ENCODE measurements at regions of chr18 and their contacts with region 1.

Region 1: GRCh38 chr18:66393463-66393862 is 210.4 kb downstream of the CDH19 start:
- DNase-seq: no peak
- ATAC-seq: no peak
- H3K4me3 ChIP-seq: no peak overlapping the region
- H3K27ac ChIP-seq: no peak overlapping the region
- H3K4me1 ChIP-seq: no peaks in the 10 kb centered on the region
- H3K27me3 ChIP-seq: no peaks in the 10 kb centered on the region
- CTCF ChIP-seq: peak in 1 of 12 donors; percentile 5
- POLR2A ChIP-seq: no peak

Region 2: GRCh38 chr18:66344227-66344626 is 49.2 kb before region 1 on chr18:
- intact Hi-C with region 1: loop called in 1 of 10 experiments (anchors 5 kb)
- DNase-seq: no peak
- ATAC-seq: no peak
- H3K4me3 ChIP-seq: no peak overlapping the region
- H3K27ac ChIP-seq: no peak overlapping the region
- H3K4me1 ChIP-seq: no peaks in the 10 kb centered on the region
- H3K27me3 ChIP-seq: no peaks in the 10 kb centered on the region
- CTCF ChIP-seq: no peak
- POLR2A ChIP-seq: no peak

Region 3: GRCh38 chr18:66432636-66433035 is 39.2 kb after region 1 on chr18:
- intact Hi-C with region 1: loop called in 1 of 10 experiments (anchors 1 kb)
- DNase-seq: no peak
- ATAC-seq: no peak
- H3K4me3 ChIP-seq: no peak overlapping the region
- H3K27ac ChIP-seq: no peak overlapping the region
- H3K4me1 ChIP-seq: no peaks in the 10 kb centered on the region
- H3K27me3 ChIP-seq: no peaks in the 10 kb centered on the region
- CTCF ChIP-seq: no peak
- POLR2A ChIP-seq: no peak

Region 4: DNA sequence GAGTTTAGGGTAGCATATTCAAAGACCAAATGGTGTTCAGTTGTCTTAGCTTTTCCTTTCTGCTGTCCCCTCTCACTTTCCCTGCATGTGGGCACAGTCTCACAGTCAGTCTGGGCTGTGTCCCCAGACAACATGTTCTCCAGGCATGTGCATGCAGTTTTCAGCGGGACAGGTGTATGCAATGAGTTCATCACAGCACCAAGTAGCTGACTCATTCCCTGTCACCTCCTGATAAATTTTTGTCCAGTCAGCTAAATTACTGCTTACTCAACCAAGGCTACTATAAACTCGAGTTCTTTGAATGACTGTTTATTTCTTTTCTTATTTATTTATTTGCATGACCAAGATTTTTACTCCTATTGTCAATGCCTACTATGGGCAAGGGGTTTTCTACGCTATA is 359.3 kb after region 1 on chr18:
- intact Hi-C with region 1: no loop called
- DNase-seq: no peak
- ATAC-seq: no peak
- H3K4me3 ChIP-seq: no peak overlapping the region
- H3K27ac ChIP-seq: no peak overlapping the region
- H3K4me1 ChIP-seq: no peaks in the 10 kb centered on the region
- H3K27me3 ChIP-seq: no peaks in the 10 kb centered on the region
- CTCF ChIP-seq: no peak
- POLR2A ChIP-seq: no peak

Region 5: DNA sequence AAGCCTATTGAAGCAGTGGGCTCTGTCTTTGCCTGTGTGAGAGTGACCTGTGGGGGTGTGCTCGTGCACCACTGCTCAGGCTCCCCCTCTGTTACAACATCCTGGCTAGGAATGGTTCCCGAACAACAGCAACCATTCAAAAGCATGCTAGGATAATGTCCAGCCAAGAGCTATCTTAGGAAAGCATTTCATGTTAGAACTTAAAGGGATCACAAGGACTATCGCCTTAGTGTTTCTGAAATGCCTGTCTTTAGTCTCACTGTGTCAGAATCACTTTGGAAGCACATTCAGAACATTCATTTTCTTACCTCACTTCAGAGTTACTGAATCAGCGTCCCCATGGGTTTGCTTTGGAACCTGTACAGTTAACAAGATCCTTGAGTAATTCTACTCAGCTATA is 1258.0 kb after region 1 on chr18:
- intact Hi-C with region 1: no loop called
- DNase-seq: no peak
- ATAC-seq: peak in 3 of 4 donors; percentile 16 to 87 (median 84)
- H3K4me3 ChIP-seq: no peak overlapping the region
- H3K27ac ChIP-seq: no peak overlapping the region
- H3K4me1 ChIP-seq: peaks cover 0 to 5% (median 0%) of the 10 kb centered on the region in 12 donors
- H3K27me3 ChIP-seq: no peaks in the 10 kb centered on the region
- CTCF ChIP-seq: no peak
- POLR2A ChIP-seq: no peak

Measured in heart left ventricle (tissue), 16 donors.